A549 (cell line): ENCODE measurements at regions of chr16 and their contacts with region 1.

Region 1: DNA sequence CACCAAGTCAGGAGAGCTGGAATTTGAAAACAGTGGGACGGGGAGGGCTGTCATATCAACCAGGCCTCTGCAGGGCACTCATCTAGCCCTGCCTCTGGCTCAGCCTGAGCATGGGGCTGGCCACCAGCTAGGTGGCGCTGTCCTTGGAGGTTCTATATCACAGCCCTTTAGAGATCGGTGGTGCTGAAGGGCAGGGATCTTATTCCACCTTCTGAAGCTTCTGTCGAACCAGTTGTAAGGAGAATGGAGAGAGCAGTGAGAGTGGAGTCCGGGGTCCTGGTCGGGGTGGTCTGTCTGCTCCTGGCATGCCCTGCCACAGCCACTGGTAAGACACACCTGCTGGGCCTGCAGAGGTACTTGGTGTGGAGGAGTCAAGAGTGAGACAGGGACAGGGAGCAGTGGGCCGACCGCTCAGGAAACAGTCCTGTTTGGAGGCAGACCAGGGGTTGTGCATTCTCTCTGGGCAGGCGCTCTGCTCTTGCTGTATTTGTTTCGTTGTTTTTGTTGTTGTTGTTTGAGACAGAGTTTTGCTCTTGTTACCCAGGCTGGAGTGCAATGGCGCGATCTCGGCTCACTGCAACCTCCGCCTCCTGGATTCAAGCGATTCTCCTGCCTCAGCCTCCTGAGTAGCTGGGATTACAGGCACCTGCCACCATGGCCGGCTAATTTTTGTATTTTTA is at the start of gene CES3:
- DNase-seq: peak; percentile 80 to 85
- ATAC-seq: peak; percentile 99 to 100
- H3K4me3 ChIP-seq: peak within 1 kb of the TSS; percentile 33
- H3K27ac ChIP-seq: peak within 1 kb of the TSS; percentile 49 to 82; a peak in 4 of 6 replicates
- H3K4me1 ChIP-seq: no peaks in the 10 kb centered on the region
- CTCF ChIP-seq: peak; percentile 85
- EP300 ChIP-seq: no peak
- POLR2A ChIP-seq: no peak
- RAD21 ChIP-seq: peak in 1 of 2 experiments; percentile 18; a peak in 1 of 5 replicates
- polyA plus RNA-seq, gene CES3: 3.8 and 4.1 TPM in 2 replicates

Region 2: GRCh38 chr16:66934153-66934838 is 26.9 kb before region 1 on chr16 and contains the start of gene CIAO2B:
- CTCF ChIA-PET with region 1: interaction called, 12 read pairs
- POLR2A ChIA-PET with region 1: no interaction called
- DNase-seq: peak; percentile 88 to 91
- ATAC-seq: peak; percentile 79 to 91
- H3K4me3 ChIP-seq: peak within 1 kb of the TSS; percentile 81
- H3K27ac ChIP-seq: peak within 1 kb of the TSS; percentile 94 to 99
- H3K4me1 ChIP-seq: peaks cover 28% of the 10 kb centered on the region
- CTCF ChIP-seq: no peak
- EP300 ChIP-seq: no peak
- POLR2A ChIP-seq: peak; percentile 94
- RAD21 ChIP-seq: no peak
- polyA plus RNA-seq, gene CIAO2B: 140 and 168 TPM in 2 replicates

Region 3: GRCh38 chr16:66940226-66940625 is 21.0 kb before region 1 on chr16:
- CTCF ChIA-PET with region 1: interaction called, 12 read pairs
- POLR2A ChIA-PET with region 1: no interaction called
- DNase-seq: no peak
- ATAC-seq: no peak
- H3K4me3 ChIP-seq: no peak overlapping the region
- H3K27ac ChIP-seq: no peak overlapping the region
- H3K4me1 ChIP-seq: peaks cover 12% of the 10 kb centered on the region; the same call in 2 of the 3 replicates
- CTCF ChIP-seq: no peak
- EP300 ChIP-seq: no peak
- POLR2A ChIP-seq: no peak
- RAD21 ChIP-seq: no peak

Region 4: GRCh38 chr16:67173808-67174705 is 212.9 kb after region 1 on chr16:
- CTCF ChIA-PET with region 1: interaction called, 6 read pairs
- POLR2A ChIA-PET with region 1: interaction called, 10 read pairs
- DNase-seq: peak; percentile 89 to 91
- ATAC-seq: peak; percentile 59 to 82
- H3K4me3 ChIP-seq: peak overlapping the region; percentile 50
- H3K27ac ChIP-seq: peak overlapping the region; percentile 84 to 87
- H3K4me1 ChIP-seq: peaks cover 45% of the 10 kb centered on the region
- CTCF ChIP-seq: peak; percentile 26; the same call in 1 of the 3 replicates
- EP300 ChIP-seq: no peak
- POLR2A ChIP-seq: peak; percentile 62
- RAD21 ChIP-seq: peak in 1 of 2 experiments; percentile 28; a peak in 2 of 5 replicates

Region 5: GRCh38 chr16:67183627-67184328 is 222.6 kb after region 1 on chr16 and contains the start of gene MATCAP1:
- CTCF ChIA-PET with region 1: interaction called, 30 read pairs
- POLR2A ChIA-PET with region 1: no interaction called
- DNase-seq: peak; percentile 98 to 99
- ATAC-seq: peak; percentile 72 to 87
- H3K4me3 ChIP-seq: peak within 1 kb of the TSS; percentile 66
- H3K27ac ChIP-seq: peak within 1 kb of the TSS; percentile 93 to 97
- H3K4me1 ChIP-seq: peaks cover 34% of the 10 kb centered on the region
- CTCF ChIP-seq: no peak
- EP300 ChIP-seq: no peak
- POLR2A ChIP-seq: peak; percentile 45
- RAD21 ChIP-seq: no peak
- polyA plus RNA-seq, gene MATCAP1: 7.2 and 7.5 TPM in 2 replicates

Region 6: GRCh38 chr16:67198238-67198734 is 237.1 kb after region 1 on chr16:
- CTCF ChIA-PET with region 1: interaction called, 11 read pairs
- POLR2A ChIA-PET with region 1: no interaction called
- DNase-seq: peak; percentile 66 to 93
- ATAC-seq: peak; percentile 76 to 89
- H3K4me3 ChIP-seq: no peak overlapping the region
- H3K27ac ChIP-seq: no peak overlapping the region
- H3K4me1 ChIP-seq: peaks cover 19% of the 10 kb centered on the region
- CTCF ChIP-seq: peak; percentile 76
- EP300 ChIP-seq: no peak
- POLR2A ChIP-seq: no peak
- RAD21 ChIP-seq: peak; percentile 44 to 47; a peak in 3 of 5 replicates